Activated CD4-positive, alpha-beta T cell treated with anti-CD3 and anti-CD28 coated beads for 36 hours (primary cell): ENCODE measurements at regions of chr11 and their contacts with region 1.

Region 1: DNA sequence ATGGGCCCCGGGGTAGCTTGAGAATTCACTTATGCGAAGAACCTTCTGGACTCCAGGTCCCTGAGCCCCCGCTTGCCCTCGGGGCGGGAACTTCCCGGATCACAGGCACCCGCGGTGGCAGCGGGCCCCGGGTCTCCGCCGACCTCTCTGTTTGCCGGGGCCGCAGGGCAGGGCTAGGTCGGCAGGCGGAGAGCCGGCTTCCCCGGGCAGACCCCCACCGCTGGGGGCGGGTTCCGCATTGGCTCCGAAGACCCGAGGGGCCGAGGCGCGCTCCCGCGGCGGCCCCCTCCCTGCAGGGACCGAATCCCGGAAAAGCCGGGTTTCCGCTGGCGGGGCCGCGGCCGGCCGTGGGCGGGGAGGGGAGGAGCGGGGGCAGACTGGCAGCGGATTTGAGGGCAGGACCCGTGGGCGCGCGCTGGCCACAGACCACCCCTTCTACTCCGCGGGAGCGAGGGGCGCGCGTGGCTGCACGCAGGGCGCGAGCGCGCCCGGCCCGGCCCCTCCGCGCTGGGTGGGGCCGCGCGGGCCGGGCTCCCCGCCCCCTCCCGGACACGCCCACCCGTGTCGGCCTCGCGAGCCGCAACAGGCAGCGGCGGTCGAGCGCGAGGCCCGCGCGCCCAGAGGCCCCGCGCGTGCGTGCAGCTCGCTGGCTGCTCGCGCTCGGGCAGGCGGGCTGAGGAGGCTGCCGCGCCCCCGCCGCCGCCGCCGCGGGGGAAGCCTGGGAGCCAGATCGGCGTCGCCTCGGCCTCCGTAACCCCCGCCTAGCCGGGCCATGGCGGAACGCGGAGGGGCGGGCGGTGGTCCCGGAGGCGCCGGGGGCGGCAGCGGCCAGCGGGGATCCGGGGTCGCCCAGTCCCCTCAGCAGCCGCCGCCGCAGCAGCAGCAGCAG is at the start of gene PACS1:
- DNase-seq: peak; percentile 83
- ATAC-seq: peak; percentile 48
- H3K4me3 Mint-ChIP-seq: peak within 1 kb of the TSS; percentile 98
- H3K27ac Mint-ChIP-seq: peak within 1 kb of the TSS; percentile 99
- H3K4me1 Mint-ChIP-seq: peaks cover 66% of the 10 kb centered on the region
- H3K27me3 Mint-ChIP-seq: no peaks in the 10 kb centered on the region
- total RNA-seq, gene PACS1: 76.6 to 90.7 TPM

Region 2: GRCh38 chr11:65497141-65498041 is 572.6 kb before region 1 on chr11:
- CTCF ChIA-PET with region 1: no interaction called
- POLR2A ChIA-PET with region 1: no interaction called
- intact Hi-C with region 1: no loop called
- DNase-seq: peak; percentile 100
- ATAC-seq: peak; percentile 70
- H3K4me3 Mint-ChIP-seq: no peak overlapping the region
- H3K27ac Mint-ChIP-seq: peak overlapping the region; percentile 96
- H3K4me1 Mint-ChIP-seq: peaks cover 41% of the 10 kb centered on the region
- H3K27me3 Mint-ChIP-seq: no peaks in the 10 kb centered on the region

Region 3: DNA sequence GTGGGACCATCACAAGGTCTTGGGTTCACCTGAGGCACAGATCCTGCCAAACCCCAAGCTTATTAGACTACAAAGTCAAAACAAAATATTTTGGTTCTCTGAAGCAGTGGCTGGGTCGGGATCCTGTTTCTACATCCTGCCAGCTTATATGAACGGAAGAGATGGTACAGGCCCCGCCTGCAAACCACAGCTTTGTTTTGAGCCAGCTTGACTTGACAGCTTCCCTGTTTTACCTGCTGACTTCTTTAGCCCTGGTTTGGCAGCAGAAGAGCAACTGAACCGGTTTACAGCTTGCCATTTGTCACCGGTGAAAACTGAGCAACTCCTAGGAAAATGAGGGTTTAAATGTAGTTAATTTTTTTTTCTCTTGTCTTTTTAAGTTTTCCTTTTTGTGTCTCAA is 11.5 kb after region 1 on chr11:
- CTCF ChIA-PET with region 1: interaction called, 18 read pairs
- POLR2A ChIA-PET with region 1: interaction called, 3 read pairs
- intact Hi-C with region 1: loop called in 1 of 2 experiments (anchors 1 kb)
- DNase-seq: peak; percentile 86
- ATAC-seq: peak; percentile 89
- H3K4me3 Mint-ChIP-seq: peak overlapping the region; percentile 62
- H3K27ac Mint-ChIP-seq: peak overlapping the region; percentile 98
- H3K4me1 Mint-ChIP-seq: peaks cover 89% of the 10 kb centered on the region
- H3K27me3 Mint-ChIP-seq: no peaks in the 10 kb centered on the region

Region 4: GRCh38 chr11:66112601-66113098 is 42.7 kb after region 1 on chr11:
- CTCF ChIA-PET with region 1: interaction called, 18 read pairs
- POLR2A ChIA-PET with region 1: interaction called, 3 read pairs
- intact Hi-C with region 1: no loop called
- DNase-seq: no peak
- ATAC-seq: no peak
- H3K4me3 Mint-ChIP-seq: no peak overlapping the region
- H3K27ac Mint-ChIP-seq: peak overlapping the region; percentile 91
- H3K4me1 Mint-ChIP-seq: peaks cover 96% of the 10 kb centered on the region
- H3K27me3 Mint-ChIP-seq: no peaks in the 10 kb centered on the region

Region 5: DNA sequence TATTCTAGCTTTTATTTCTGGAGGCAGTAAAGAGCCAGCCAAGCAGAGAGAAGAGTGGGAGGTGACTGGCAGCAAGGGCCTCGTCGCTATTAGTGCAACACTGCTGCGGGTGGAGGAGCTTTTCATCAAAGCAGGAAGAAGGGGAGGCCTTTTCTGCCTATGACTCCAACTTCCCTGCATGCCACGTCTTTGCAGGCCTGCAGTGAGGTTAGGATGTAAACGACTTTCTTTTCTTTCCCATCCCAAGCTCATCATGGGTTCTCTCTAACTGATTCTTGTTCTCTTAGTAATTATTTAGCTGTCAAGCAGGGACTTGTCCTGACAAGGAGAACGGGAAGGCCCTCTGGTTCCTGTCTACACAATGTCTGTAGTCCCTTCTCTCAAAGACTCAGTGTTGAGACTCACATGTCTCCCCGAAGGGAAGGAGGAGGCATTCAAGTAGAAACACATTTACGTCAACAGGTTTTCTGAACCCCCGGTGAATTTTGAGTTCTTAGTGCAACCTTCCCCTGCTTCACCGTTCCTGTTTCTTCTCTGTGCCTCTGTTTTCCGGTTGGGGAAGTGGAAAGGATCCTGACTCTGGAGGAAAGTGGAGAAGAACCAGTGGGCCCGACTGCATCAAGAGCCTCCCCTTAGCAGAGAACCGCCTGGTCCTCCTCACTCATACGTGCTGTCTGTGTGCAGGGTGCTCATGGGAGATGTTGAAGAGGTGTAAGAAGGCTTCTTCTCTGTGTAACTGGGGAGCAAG is 57.0 kb after region 1 on chr11:
- CTCF ChIA-PET with region 1: interaction called, 14 read pairs
- POLR2A ChIA-PET with region 1: interaction called, 6 read pairs
- intact Hi-C with region 1: loop called (anchors 2 kb)
- DNase-seq: peak; percentile 85
- ATAC-seq: peak; percentile 87
- H3K4me3 Mint-ChIP-seq: peak overlapping the region; percentile 71
- H3K27ac Mint-ChIP-seq: peak overlapping the region; percentile 99
- H3K4me1 Mint-ChIP-seq: peaks cover 77% of the 10 kb centered on the region
- H3K27me3 Mint-ChIP-seq: no peaks in the 10 kb centered on the region

Region 6: DNA sequence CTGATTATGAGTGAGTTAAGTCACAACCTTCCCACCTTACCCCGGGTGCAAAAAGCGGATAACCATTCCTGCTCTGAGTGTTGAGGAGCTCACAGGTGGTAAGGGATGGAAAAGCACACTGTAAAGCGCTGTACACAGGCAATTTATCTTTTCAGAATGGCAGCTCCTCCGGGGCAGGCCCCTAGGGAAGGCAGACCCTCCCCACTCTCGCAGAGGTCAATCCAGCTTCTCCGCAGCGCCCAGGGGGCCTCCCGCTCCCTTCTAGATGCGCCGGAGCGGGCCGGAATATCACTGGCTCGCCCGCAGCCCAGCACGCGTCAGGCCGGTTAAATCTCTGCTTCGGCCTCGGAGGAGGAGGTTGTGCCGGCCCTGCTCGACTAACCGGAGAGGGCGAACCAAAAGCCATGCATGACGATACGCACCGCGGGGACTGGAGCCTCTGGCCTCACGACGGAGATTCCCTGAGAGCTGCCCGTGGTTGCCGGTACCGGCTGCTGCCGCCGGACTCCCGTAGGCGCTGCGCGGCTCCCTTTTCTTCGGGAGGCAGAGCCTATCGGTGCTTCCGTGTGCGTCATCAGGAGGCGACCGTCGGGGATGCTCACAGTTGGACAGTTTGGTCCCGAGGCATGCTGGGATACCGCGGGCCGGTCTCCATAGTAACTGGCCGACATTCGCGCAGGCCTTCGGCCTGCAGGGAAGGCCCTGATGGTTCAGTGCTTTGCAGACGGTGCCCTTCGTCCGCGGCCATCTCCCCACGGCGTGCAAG is 274.8 kb after region 1 on chr11 and contains the start of gene BRMS1:
- CTCF ChIA-PET with region 1: no interaction called
- POLR2A ChIA-PET with region 1: no interaction called
- intact Hi-C with region 1: loop called in 1 of 2 experiments (anchors 5 kb)
- DNase-seq: peak; percentile 98
- ATAC-seq: peak; percentile 80
- H3K4me3 Mint-ChIP-seq: peak within 1 kb of the TSS; percentile 93
- H3K27ac Mint-ChIP-seq: peak within 1 kb of the TSS; percentile 90
- H3K4me1 Mint-ChIP-seq: peaks cover 45% of the 10 kb centered on the region
- H3K27me3 Mint-ChIP-seq: peaks cover 3% of the 10 kb centered on the region
- total RNA-seq, gene BRMS1: 29.2 to 30.2 TPM